GM12878 (cell line): ENCODE measurements at regions of chr6 and their contacts with region 1.

Region 1: DNA sequence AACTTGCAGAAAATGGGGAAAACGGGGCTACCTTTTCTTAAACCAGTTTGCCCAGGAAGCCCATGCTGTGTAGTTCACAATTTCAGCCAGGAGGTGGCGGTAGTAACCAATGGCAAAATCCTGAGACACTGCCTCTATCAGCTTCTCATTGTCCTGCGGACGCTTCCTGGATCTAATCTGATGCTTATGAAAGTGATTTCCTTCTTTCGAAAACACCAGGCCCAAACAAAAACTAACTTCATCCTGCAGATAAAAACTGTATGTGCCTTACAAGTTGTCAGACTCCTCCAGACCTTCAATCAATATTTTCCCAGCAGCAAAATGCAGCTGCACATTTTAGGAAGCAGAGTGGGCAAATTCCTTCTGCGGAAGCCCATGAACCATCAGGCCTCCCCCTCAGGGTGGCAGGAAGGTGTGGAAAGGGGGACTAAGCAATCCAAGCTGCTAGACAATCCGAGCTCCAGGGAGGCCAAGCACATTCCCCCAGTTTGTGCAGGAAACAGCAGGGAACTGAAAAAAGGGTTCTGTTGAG is 88.5 kb downstream of the LY86 start:
- DNase-seq: peak; percentile 66
- ATAC-seq: peak; percentile 94
- H3K4me3 ChIP-seq: no peak overlapping the region
- H3K27ac ChIP-seq: 0 out of 2 replicates have a peak overlapping the region, but pooled peaks have one; percentile 20
- H3K4me1 ChIP-seq: peaks cover 8% of the 10 kb centered on the region
- H3K27me3 ChIP-seq: no peaks in the 10 kb centered on the region
- CTCF ChIP-seq: peak; percentile 91 to 97 (median 95); a peak in 5 of 6 replicates
- EP300 ChIP-seq: no peak
- POLR2A ChIP-seq: no peak
- RAD21 ChIP-seq: peak; percentile 96

Region 2: GRCh38 chr6:6556738-6557505 is 120.1 kb before region 1 on chr6:
- CTCF ChIA-PET with region 1: interaction called, 10 read pairs
- POLR2A ChIA-PET with region 1: no interaction called
- RAD21 ChIA-PET with region 1: interaction called, 9 read pairs
- SMC1A ChIA-PET with region 1: interaction called, 12 read pairs
- in situ Hi-C with region 1: no loop called
- intact Hi-C with region 1: no loop called
- DNase-seq: no peak
- ATAC-seq: peak; percentile 91
- H3K4me3 ChIP-seq: no peak overlapping the region
- H3K27ac ChIP-seq: no peak overlapping the region
- H3K4me1 ChIP-seq: no peaks in the 10 kb centered on the region; the same call in 1 of the 2 replicates
- H3K27me3 ChIP-seq: no peaks in the 10 kb centered on the region
- CTCF ChIP-seq: peak; percentile 82 to 92 (median 91)
- EP300 ChIP-seq: no peak
- POLR2A ChIP-seq: no peak
- RAD21 ChIP-seq: peak; percentile 84

Region 3: DNA sequence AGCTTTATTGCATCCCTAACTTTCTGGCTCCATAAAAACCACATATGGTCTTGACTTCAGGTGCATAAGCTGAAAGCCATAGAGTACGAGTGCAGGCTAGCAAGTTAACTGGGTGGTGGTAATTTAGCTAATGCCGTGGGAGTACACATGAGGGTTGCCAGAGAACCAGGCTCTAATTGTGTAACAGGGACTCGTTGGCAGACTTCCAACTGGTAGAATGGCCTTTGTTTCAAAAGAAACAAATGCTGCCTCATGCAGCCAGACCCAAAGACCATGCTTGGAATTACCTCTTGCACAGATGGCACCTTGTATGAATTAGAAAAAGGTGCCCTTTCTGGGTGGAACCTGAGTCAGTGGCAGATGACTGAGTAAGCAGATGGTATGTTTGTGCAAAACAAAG is 15.3 kb before region 1 on chr6:
- CTCF ChIA-PET with region 1: interaction called, 24 read pairs
- POLR2A ChIA-PET with region 1: interaction called, 4 read pairs
- RAD21 ChIA-PET with region 1: interaction called, 7 read pairs
- SMC1A ChIA-PET with region 1: interaction called, 40 read pairs
- in situ Hi-C with region 1: no loop called
- intact Hi-C with region 1: no loop called
- DNase-seq: no peak
- ATAC-seq: no peak
- H3K4me3 ChIP-seq: no peak overlapping the region
- H3K27ac ChIP-seq: no peak overlapping the region
- H3K4me1 ChIP-seq: peaks cover 24% of the 10 kb centered on the region
- H3K27me3 ChIP-seq: no peaks in the 10 kb centered on the region
- CTCF ChIP-seq: no peak
- EP300 ChIP-seq: no peak
- POLR2A ChIP-seq: no peak
- RAD21 ChIP-seq: no peak

Region 4: DNA sequence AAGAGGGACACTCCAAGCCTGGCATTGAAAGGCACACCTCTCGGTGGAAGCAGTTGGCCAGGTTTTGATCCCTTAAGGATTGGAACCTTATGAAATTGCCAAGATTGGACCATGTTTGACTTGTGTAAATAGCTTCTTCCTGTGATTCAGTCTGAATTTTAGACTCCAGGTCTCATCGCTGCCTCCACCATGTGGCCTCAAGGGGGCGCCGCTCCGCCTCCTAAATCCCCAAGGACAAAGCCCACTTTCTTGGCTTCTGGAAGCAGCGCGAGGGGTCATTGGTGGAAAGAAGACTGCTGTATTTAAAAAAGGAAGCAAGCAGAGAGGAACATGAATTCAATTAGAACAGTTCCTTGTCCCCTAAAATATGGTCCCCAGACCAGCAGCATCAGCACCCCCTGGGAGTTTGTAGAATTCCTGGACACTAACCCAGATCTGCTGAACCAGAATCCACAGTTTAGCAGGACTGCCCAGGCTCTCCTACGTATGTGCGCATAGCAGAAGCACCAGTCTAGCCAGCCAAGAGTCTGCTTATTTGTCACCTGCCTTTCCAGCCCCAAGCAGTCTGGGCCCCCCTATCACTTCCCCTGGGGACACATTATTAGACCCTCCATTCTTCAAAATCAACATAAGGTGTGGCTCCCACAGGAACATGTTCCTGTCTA is 20.0 kb after region 1 on chr6:
- CTCF ChIA-PET with region 1: interaction called, 44 read pairs
- POLR2A ChIA-PET with region 1: interaction called, 3 read pairs
- RAD21 ChIA-PET with region 1: interaction called, 15 read pairs
- SMC1A ChIA-PET with region 1: interaction called, 10 read pairs
- in situ Hi-C with region 1: no loop called
- intact Hi-C with region 1: no loop called
- DNase-seq: no peak
- ATAC-seq: peak; percentile 71
- H3K4me3 ChIP-seq: no peak overlapping the region
- H3K27ac ChIP-seq: no peak overlapping the region
- H3K4me1 ChIP-seq: no peaks in the 10 kb centered on the region
- H3K27me3 ChIP-seq: no peaks in the 10 kb centered on the region; a peak in 1 of 4 replicates
- CTCF ChIP-seq: peak; percentile 53 to 80 (median 66)
- EP300 ChIP-seq: no peak
- POLR2A ChIP-seq: no peak
- RAD21 ChIP-seq: peak; percentile 75

Region 5: GRCh38 chr6:6724539-6725467 is 47.8 kb after region 1 on chr6:
- CTCF ChIA-PET with region 1: interaction called, 82 read pairs
- POLR2A ChIA-PET with region 1: interaction called, 4 read pairs
- RAD21 ChIA-PET with region 1: interaction called, 48 read pairs
- SMC1A ChIA-PET with region 1: interaction called, 52 read pairs
- in situ Hi-C with region 1: no loop called
- intact Hi-C with region 1: no loop called
- DNase-seq: no peak
- ATAC-seq: peak; percentile 91
- H3K4me3 ChIP-seq: peak overlapping the region; percentile 37; the same call in 1 of the 2 replicates
- H3K27ac ChIP-seq: no peak overlapping the region
- H3K4me1 ChIP-seq: peaks cover 11% of the 10 kb centered on the region
- H3K27me3 ChIP-seq: no peaks in the 10 kb centered on the region
- CTCF ChIP-seq: peak; percentile 65 to 82 (median 70)
- EP300 ChIP-seq: no peak
- POLR2A ChIP-seq: no peak
- RAD21 ChIP-seq: peak; percentile 87

Region 6: GRCh38 chr6:6749702-6750491 is 72.9 kb after region 1 on chr6:
- CTCF ChIA-PET with region 1: interaction called, 11 read pairs
- POLR2A ChIA-PET with region 1: no interaction called
- RAD21 ChIA-PET with region 1: no interaction called
- SMC1A ChIA-PET with region 1: no interaction called
- in situ Hi-C with region 1: no loop called
- intact Hi-C with region 1: no loop called
- DNase-seq: no peak
- ATAC-seq: peak; percentile 69
- H3K4me3 ChIP-seq: no peak overlapping the region
- H3K27ac ChIP-seq: no peak overlapping the region
- H3K4me1 ChIP-seq: no peaks in the 10 kb centered on the region
- H3K27me3 ChIP-seq: no peaks in the 10 kb centered on the region
- CTCF ChIP-seq: no peak
- EP300 ChIP-seq: no peak
- POLR2A ChIP-seq: no peak
- RAD21 ChIP-seq: no peak

Region 7: DNA sequence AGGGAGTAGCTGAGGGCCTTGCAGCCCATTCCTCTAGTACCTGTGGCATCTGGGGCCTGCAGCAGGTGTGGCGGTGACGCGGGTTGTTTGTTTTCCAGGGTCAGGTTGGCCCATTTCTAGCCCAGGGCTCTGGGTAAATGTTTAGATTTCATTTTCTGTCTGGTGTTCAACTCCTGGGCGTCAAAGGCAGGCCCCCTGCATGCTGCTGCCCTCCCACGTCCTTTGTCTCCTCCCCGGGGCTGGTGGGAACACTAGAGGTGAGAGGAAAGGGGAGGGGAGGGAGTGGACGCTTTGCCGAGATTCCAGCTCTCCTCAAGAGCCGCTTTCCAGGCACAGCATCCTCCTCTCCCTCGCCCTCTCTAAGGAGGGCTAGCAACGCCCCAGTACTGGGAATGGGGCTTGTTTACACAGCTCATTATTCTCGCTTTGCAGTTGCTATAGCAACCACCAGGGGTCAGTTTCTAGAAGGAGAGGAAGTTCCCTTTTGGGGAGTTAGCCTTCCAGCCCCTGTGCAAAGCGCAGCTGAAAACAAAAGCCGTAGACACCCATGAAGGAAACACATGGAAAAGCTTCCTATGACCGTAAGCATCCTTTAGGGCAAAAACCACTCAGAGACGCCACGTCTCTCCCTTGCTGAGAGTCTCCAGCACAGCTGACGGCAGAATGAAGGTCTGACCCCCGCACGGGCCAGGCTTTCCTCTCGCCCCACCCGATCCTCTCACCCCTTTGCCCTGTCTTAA is 82.1 kb after region 1 on chr6:
- CTCF ChIA-PET with region 1: interaction called, 7 read pairs
- POLR2A ChIA-PET with region 1: no interaction called
- RAD21 ChIA-PET with region 1: interaction called, 9 read pairs
- SMC1A ChIA-PET with region 1: interaction called, 13 read pairs
- in situ Hi-C with region 1: no loop called
- intact Hi-C with region 1: no loop called
- DNase-seq: peak; percentile 13
- ATAC-seq: peak; percentile 97
- H3K4me3 ChIP-seq: no peak overlapping the region
- H3K27ac ChIP-seq: no peak overlapping the region
- H3K4me1 ChIP-seq: peaks cover 7% of the 10 kb centered on the region
- H3K27me3 ChIP-seq: no peaks in the 10 kb centered on the region
- CTCF ChIP-seq: peak; percentile 55 to 65 (median 57)
- EP300 ChIP-seq: 0 out of 4 replicates have a peak, but pooled peaks of 1 of the 2 experiments have one; percentile 29
- POLR2A ChIP-seq: no peak
- RAD21 ChIP-seq: peak; percentile 70

Region 8: DNA sequence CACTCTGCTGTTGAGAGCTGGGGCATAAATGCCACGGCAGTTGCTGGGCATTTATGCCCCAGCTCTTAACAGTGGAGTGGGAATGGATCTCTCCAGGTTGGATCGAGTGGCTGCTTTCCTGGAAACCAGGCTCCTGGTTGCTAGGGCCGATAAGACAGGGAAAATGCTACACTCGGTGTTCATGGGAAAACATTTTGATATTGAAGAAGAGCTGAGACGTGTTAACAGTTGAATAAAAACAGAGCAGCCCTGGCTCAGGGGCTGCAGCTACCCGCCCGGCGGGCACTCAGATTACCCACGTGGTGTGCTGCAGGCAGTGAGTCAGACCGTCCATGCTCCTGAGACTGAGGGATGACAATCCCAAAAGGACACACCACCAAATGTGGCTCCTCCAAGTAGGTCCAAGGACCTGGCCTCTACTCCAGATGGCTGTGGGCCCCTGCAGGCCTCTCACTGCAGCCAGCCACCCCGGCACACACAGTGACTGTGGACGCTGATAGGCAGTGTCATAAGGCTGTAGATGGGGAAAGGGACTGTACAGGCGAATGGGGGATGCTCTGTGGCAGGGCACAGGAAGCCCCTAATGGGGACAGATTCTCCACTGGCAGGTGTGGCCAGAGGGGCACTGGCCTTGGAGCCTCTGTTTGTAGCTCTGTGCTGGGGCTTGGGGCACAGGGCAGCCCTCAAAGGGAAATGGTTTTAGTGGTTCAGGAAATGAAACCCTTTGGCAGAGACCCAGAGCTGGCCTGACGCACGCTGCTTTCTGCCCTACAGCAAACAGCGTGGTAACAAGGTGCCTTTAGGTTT is 149.3 kb after region 1 on chr6:
- CTCF ChIA-PET with region 1: no interaction called
- POLR2A ChIA-PET with region 1: no interaction called
- RAD21 ChIA-PET with region 1: no interaction called
- SMC1A ChIA-PET with region 1: no interaction called
- in situ Hi-C with region 1: no loop called
- intact Hi-C with region 1: no loop called
- DNase-seq: peak; percentile 69
- ATAC-seq: peak; percentile 95
- H3K4me3 ChIP-seq: no peak overlapping the region
- H3K27ac ChIP-seq: no peak overlapping the region
- H3K4me1 ChIP-seq: peaks cover 23% of the 10 kb centered on the region
- H3K27me3 ChIP-seq: no peaks in the 10 kb centered on the region
- CTCF ChIP-seq: no peak
- EP300 ChIP-seq: peak in 1 of 2 experiments; percentile 13; a peak in 1 of 4 replicates
- POLR2A ChIP-seq: no peak
- RAD21 ChIP-seq: no peak